CD4-positive, alpha-beta T cell (primary cell): ENCODE measurements at regions of chr16 and their contacts with region 1.

Region 1: DNA sequence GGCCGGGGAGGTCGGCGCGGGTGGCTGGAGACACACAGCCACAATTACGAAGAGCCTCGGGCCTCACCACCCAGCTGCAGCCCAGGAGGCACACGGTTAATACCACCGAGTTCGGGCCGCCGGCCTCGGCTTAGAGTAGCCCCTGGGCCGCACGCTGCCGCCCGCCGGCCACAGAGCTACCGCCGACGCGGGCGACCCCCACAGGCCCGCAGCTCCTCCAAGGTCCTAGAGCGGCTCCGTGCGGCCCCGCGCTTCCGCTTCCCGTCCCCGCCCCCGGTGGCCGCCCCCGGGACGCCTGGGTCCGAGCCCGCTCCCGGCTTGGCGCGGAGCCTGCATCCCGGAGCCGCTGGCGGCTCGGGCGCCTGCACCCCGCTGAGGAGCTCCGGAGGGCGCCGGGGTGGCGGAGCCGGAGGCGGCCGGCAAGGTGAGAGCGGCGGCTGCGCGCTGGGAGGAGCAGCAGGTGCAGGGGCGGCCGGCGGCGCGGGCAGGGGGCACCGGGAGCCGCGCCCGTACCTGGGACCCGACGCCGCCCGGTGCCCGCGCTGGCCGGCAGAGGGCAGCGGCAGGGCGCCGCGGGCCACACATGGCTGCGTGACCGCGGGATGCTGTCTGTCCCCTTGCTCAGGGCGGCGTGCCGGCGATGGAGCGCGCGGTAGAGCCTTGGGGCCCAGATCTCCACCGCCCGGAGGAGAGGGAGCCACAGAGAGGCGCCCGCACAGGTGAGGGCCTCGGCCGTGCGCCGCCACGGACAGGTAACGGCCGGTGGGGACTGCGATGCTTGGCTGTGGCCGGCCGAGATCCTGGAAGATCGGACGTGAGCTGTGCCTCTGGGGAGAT is at the start of gene ZNF48:
- DNase-seq: peak in 11 of 14 experiments; percentile 45 to 80 (median 56)
- ATAC-seq: peak; percentile 64
- H3K4me3 ChIP-seq: peak within 1 kb of the TSS; percentile 86
- H3K4me3 Mint-ChIP-seq: peak within 1 kb of the TSS; percentile 90
- H3K27ac ChIP-seq: peak within 1 kb of the TSS; percentile 34 to 56
- H3K27ac Mint-ChIP-seq: peak within 1 kb of the TSS; percentile 57
- H3K4me1 ChIP-seq: peaks cover 46% of the 10 kb centered on the region
- H3K4me1 Mint-ChIP-seq: peaks cover 42% of the 10 kb centered on the region
- H3K27me3 ChIP-seq: no peaks in the 10 kb centered on the region
- H3K27me3 Mint-ChIP-seq: no peaks in the 10 kb centered on the region
- CTCF ChIP-seq: no peak
- total RNA-seq, gene ZNF48: 3.4 to 3.5 TPM

Region 2: DNA sequence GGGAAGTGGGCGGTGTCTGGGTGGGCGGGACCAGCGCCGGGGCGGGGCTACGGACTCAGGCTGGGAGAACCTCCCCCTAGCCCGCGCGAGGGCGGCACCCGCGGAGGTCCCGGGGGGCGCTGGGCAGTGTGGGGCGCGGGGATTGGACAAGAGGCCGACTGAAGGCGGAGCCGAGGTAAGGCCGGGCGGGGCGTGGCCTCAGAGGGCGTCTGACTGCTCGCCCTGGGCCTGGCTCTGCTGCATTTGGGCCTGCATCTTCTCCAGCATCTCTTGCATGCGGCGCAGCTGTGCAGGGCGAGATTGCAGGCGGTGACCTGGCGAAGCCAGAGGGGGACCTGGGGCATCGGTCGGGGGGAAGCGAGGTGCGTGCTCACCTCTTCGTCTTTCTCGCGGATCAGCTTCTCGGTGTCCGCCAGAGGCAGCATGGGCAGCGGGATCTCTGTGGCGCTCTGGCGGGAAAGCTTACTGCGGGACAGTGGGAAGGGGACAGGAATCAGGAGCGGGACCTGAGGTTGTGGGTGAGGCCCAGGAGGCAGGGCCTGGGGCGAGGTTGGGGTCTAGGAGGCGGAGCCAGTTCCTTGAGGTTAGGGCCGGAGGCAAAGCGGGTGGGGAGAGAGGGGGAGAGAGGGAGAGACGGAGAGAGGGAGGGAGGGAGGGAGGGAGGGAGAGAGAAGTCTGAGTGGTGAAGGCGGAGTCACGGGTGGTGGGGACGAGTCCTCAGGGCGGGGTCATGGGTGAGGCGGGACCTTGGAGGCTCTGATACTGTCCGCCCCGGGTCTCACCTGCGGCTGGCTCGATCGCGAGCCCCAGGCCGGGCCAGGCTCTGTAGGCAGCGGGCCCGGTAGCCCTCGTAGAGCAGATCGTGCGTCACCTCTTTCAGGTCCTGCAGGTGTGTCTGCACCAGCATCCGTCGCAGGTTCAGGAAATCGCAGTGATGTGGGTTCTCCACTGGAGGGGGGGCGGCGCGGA is 16.9 kb before region 1 on chr16:
- CTCF ChIA-PET with region 1: interaction called, 8 read pairs
- POLR2A ChIA-PET with region 1: interaction called, 147 read pairs
- intact Hi-C with region 1: loop called in 1 of 2 experiments (anchors 1 kb)
- DNase-seq: peak; percentile 98 to 100 (median 100)
- ATAC-seq: peak; percentile 74
- H3K4me3 ChIP-seq: peak overlapping the region; percentile 71
- H3K4me3 Mint-ChIP-seq: peak overlapping the region; percentile 99
- H3K27ac ChIP-seq: peak overlapping the region; percentile 100
- H3K27ac Mint-ChIP-seq: peak overlapping the region; percentile 100
- H3K4me1 ChIP-seq: peaks cover 79% of the 10 kb centered on the region
- H3K4me1 Mint-ChIP-seq: peaks cover 60% of the 10 kb centered on the region
- H3K27me3 ChIP-seq: no peaks in the 10 kb centered on the region
- H3K27me3 Mint-ChIP-seq: no peaks in the 10 kb centered on the region
- CTCF ChIP-seq: no peak

Region 3: DNA sequence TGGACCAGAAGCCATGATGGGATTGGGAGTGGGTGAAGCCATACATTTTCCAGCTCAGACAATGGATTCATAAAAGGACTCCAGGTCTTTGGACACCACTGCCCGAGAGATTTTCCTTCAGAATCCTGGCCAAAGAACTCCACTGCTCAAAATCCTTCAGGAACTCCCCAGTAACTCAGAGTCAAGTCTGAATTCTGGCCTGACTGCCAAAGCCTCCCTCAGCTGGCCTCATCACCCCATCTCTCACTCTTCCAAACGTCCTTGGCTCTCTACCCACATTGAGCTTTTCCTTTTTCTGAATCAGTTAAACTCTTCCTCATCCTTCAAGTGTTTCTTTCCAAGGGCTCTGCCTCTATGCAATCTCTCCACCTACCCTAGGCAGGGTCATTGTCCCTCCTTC is 11.9 kb before region 1 on chr16:
- CTCF ChIA-PET with region 1: interaction called, 8 read pairs
- POLR2A ChIA-PET with region 1: interaction called, 147 read pairs
- intact Hi-C with region 1: loop called in 1 of 2 experiments (anchors 1 kb)
- DNase-seq: no peak
- ATAC-seq: no peak
- H3K4me3 ChIP-seq: peak overlapping the region; percentile 81
- H3K4me3 Mint-ChIP-seq: peak overlapping the region; percentile 99
- H3K27ac ChIP-seq: peak overlapping the region; percentile 65 to 100
- H3K27ac Mint-ChIP-seq: peak overlapping the region; percentile 100
- H3K4me1 ChIP-seq: peaks cover 60% of the 10 kb centered on the region
- H3K4me1 Mint-ChIP-seq: peaks cover 48% of the 10 kb centered on the region
- H3K27me3 ChIP-seq: no peaks in the 10 kb centered on the region
- H3K27me3 Mint-ChIP-seq: no peaks in the 10 kb centered on the region
- CTCF ChIP-seq: no peak

Region 4: GRCh38 chr16:30407102-30407803 is 11.9 kb after region 1 on chr16 and contains the start of gene ZNF771:
- CTCF ChIA-PET with region 1: interaction called, 18 read pairs
- POLR2A ChIA-PET with region 1: interaction called, 35 read pairs
- intact Hi-C with region 1: no loop called
- DNase-seq: peak; percentile 68 to 96 (median 86)
- ATAC-seq: peak; percentile 71
- H3K4me3 ChIP-seq: peak within 1 kb of the TSS; percentile 69
- H3K4me3 Mint-ChIP-seq: peak within 1 kb of the TSS; percentile 97
- H3K27ac ChIP-seq: peak within 1 kb of the TSS; percentile 66 to 67
- H3K27ac Mint-ChIP-seq: peak within 1 kb of the TSS; percentile 79
- H3K4me1 ChIP-seq: peaks cover 31% of the 10 kb centered on the region
- H3K4me1 Mint-ChIP-seq: peaks cover 21% of the 10 kb centered on the region
- H3K27me3 ChIP-seq: no peaks in the 10 kb centered on the region
- H3K27me3 Mint-ChIP-seq: no peaks in the 10 kb centered on the region
- CTCF ChIP-seq: no peak
- total RNA-seq, gene ZNF771: 0.80 to 1.2 TPM

Region 5: GRCh38 chr16:30535777-30536190 is 140.4 kb after region 1 on chr16:
- CTCF ChIA-PET with region 1: no interaction called
- POLR2A ChIA-PET with region 1: no interaction called
- intact Hi-C with region 1: no loop called
- DNase-seq: peak; percentile 40 to 83 (median 55)
- ATAC-seq: peak; percentile 62
- H3K4me3 ChIP-seq: peak overlapping the region; percentile 87
- H3K4me3 Mint-ChIP-seq: peak overlapping the region; percentile 94
- H3K27ac ChIP-seq: peak overlapping the region; percentile 85 to 96
- H3K27ac Mint-ChIP-seq: peak overlapping the region; percentile 99
- H3K4me1 ChIP-seq: peaks cover 40% of the 10 kb centered on the region
- H3K4me1 Mint-ChIP-seq: peaks cover 35% of the 10 kb centered on the region
- H3K27me3 ChIP-seq: no peaks in the 10 kb centered on the region
- H3K27me3 Mint-ChIP-seq: no peaks in the 10 kb centered on the region
- CTCF ChIP-seq: peak; percentile 57